GM23248 (cell line): ENCODE measurements at regions of chr4 and their contacts with region 1.

Region 1: DNA sequence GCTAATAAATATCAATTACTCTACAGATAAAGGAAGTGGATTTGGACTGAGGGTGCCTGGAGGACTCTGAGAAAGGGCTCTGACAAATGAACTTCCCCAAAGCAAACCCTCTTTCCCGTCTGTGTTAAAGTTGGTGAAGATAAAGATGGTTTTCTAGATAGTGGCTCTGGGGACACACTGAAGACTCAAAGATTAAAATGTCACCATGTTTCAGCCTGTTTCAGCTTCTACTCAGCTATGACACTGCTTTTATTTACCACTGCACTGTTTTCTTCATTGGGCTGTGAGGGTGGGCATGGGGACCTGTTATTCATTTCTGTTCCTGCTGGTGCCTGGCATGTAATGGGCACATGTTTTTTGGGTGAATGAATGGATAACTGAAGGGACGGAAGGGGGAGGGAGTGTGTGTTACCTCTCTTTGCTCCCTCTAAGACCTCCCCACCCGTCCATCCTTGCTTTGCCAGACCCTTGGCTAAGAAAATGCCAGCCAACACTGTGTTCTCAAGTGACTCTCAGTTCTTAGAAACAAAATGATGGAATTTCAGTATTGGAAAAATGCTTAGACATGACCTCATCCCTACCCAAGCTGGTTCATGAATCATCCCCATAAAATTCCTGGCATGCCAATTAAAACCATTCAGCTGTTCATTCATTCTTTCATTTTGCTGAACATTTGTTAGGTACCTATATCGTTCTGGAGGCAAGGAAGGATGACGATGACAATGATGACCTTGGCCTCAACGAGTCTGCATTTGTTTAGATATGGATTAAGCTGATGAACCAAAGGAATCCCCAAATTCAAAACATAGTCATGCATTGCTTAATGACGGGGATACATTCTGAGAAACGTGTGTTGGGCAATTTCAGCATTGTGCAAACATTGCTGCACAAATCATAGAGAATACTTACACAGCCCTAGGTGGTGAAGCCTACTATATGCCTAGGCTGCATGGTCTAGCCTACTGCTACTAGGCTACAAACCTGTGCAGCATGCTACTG is 13.4 kb upstream of the STK32B start:
- DNase-seq: peak; percentile 92
- H3K4me3 ChIP-seq: peak overlapping the region; percentile 4; the same call in 1 of the 2 replicates
- H3K27ac ChIP-seq: peak overlapping the region; percentile 55
- H3K4me1 ChIP-seq: peaks cover 37% of the 10 kb centered on the region
- H3K27me3 ChIP-seq: peaks cover 7% of the 10 kb centered on the region; the same call in 1 of the 2 replicates

Region 2: DNA sequence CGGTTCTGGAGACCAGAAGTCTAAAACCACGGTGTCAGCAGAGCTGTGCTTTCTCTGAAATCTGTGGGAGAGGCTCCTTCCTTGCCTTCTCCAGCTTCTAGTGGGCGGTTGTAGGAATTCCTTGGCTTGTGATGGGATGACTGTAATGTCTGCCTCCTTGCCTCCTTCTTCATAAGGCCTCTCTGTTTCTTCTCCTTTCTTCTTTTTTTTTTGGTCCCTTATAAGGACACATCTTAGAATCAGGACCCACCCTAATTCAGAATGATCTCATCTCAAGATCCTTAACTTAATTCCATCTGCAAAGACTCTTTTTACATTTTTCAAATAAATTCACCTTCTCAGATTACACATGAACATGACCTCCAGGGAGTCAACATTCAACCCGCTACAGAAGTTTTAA is 200.3 kb after region 1 on chr4:
- in situ Hi-C with region 1: no loop called
- DNase-seq: peak; percentile 72
- H3K4me3 ChIP-seq: peak overlapping the region; percentile 14; the same call in 1 of the 2 replicates
- H3K27ac ChIP-seq: peak overlapping the region; percentile 29
- H3K4me1 ChIP-seq: peaks cover 14% of the 10 kb centered on the region; the same call in 1 of the 2 replicates
- H3K27me3 ChIP-seq: no peaks in the 10 kb centered on the region

Region 3: DNA sequence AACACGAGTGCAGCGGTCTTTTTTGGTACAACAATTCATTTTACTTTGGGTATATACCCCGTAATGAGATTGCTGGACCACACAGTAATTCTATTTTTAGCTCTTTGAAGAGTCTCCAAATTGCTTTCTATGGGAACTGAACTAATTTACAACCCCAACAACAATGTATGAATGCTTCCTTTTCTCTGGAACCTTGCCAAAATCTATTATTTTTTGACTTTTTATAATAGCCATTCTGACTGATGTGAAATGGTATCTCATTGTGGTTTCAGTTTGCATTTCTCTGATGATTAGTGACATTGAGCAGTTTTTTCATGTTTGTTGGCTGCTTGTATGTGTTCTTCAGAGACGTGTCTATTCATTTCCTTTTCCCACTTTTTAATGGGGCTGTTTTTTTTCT is 254.2 kb after region 1 on chr4:
- in situ Hi-C with region 1: no loop called
- DNase-seq: no peak
- H3K4me3 ChIP-seq: no peak overlapping the region
- H3K27ac ChIP-seq: no peak overlapping the region
- H3K4me1 ChIP-seq: no peaks in the 10 kb centered on the region
- H3K27me3 ChIP-seq: no peaks in the 10 kb centered on the region

Region 4: DNA sequence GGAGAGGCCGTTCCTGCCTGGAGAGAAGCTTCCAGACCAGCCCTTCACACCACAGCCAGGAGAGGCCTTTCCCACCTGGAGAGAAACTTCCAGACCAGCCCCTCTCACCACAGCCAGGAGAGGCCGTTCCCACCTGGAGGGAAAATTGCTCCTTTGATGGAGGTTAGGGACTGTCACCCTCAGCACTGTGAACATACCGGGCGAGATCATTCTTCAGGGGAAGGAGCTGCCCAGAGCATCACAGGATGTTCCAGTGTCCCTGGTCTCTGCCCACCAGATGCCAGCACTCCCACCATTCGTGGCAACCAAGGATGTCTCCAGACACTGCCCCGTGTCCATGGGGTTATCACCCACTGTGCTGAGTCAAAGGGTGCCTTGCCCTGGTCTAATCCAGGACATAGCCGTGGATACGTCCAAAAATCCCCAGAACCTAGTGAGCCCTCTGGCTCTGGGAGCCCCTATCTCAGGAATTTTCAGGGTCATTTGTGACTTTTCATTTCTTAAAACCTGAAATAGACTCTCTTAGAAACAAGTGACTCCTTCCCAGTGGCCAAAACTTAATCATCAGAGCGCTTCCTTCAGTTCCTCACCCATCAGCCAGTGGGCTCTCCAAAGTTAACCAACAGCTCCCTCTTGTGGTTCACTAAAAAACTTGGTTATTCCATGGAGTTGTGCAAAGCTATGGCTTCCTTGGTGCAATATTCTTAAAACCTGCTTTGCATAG is 774.8 kb after region 1 on chr4:
- in situ Hi-C with region 1: loop called (anchors 25 kb)
- DNase-seq: peak; percentile 85
- H3K4me3 ChIP-seq: no peak overlapping the region
- H3K27ac ChIP-seq: peak overlapping the region; percentile 34; the same call in 1 of the 2 replicates
- H3K4me1 ChIP-seq: no peaks in the 10 kb centered on the region
- H3K27me3 ChIP-seq: no peaks in the 10 kb centered on the region